Naive thymus-derived CD8-positive, alpha-beta T cell (primary cell): ENCODE measurements at regions of chr1 and their contacts with region 1.

Region 1: GRCh38 chr1:101262630-101263348 is 26.0 kb downstream of the S1PR1 start:
- DNase-seq: peak in 5 of 10 donors; percentile 21 to 67 (median 58)
- ATAC-seq: peak; percentile 65 to 77
- H3K4me3 Mint-ChIP-seq: peak overlapping the region; percentile 51 to 81 (median 80)
- H3K27ac Mint-ChIP-seq: peak overlapping the region; percentile 75 to 94 (median 90)
- H3K4me1 Mint-ChIP-seq: peaks cover 51 to 94% (median 90%) of the 10 kb centered on the region in 4 donors
- H3K27me3 Mint-ChIP-seq: no peaks in the 10 kb centered on the region

Region 2: DNA sequence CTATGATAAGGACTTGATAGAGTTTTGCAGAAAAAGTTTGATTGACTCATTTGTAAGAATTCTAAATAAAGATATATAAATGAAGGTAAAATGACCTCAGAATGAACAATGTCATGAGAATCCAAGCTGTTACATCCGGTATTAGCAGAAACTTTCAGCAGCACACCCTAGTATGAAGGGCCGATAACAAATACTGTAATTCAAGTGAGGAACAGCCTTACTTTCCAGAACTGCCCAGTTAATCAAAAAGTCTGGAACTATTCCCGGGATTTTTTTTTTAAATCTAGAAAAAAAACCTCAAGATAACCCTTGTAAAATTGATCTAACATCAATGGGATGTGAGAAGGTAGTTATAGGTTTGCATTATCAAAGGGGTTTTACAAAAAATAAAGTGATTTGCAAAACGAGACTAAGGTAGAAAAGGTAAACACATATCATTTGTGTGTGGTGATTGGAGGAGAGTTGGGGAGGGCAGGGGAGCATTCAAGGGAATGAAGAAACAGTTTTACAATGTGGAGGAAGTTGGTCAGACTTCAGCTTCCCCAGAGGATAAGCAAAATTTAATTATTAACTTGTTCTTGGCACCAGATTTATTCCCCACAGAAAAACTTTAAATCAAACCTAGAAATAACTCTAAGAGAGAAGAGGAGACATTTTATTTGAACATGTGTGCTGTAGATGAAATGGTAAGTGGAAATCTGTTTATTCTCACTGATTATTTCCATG is 619.2 kb before region 1 on chr1:
- POLR2A ChIA-PET with region 1: no interaction called
- DNase-seq: no peak
- ATAC-seq: no peak
- H3K4me3 Mint-ChIP-seq: no peak overlapping the region
- H3K27ac Mint-ChIP-seq: no peak overlapping the region
- H3K4me1 Mint-ChIP-seq: no peaks in the 10 kb centered on the region
- H3K27me3 Mint-ChIP-seq: peaks cover 1 to 39% (median 10%) of the 10 kb centered on the region in 5 donors

Region 3: GRCh38 chr1:101228424-101229134 is 34.2 kb before region 1 on chr1:
- POLR2A ChIA-PET with region 1: no interaction called
- DNase-seq: no peak
- ATAC-seq: peak in 1 of 2 donors; percentile 38
- H3K4me3 Mint-ChIP-seq: no peak overlapping the region
- H3K27ac Mint-ChIP-seq: peak overlapping the region in 4 of 10 donors; percentile 44 to 82 (median 63)
- H3K4me1 Mint-ChIP-seq: peaks cover 11 to 26% (median 22%) of the 10 kb centered on the region in 4 donors
- H3K27me3 Mint-ChIP-seq: no peaks in the 10 kb centered on the region

Region 4: DNA sequence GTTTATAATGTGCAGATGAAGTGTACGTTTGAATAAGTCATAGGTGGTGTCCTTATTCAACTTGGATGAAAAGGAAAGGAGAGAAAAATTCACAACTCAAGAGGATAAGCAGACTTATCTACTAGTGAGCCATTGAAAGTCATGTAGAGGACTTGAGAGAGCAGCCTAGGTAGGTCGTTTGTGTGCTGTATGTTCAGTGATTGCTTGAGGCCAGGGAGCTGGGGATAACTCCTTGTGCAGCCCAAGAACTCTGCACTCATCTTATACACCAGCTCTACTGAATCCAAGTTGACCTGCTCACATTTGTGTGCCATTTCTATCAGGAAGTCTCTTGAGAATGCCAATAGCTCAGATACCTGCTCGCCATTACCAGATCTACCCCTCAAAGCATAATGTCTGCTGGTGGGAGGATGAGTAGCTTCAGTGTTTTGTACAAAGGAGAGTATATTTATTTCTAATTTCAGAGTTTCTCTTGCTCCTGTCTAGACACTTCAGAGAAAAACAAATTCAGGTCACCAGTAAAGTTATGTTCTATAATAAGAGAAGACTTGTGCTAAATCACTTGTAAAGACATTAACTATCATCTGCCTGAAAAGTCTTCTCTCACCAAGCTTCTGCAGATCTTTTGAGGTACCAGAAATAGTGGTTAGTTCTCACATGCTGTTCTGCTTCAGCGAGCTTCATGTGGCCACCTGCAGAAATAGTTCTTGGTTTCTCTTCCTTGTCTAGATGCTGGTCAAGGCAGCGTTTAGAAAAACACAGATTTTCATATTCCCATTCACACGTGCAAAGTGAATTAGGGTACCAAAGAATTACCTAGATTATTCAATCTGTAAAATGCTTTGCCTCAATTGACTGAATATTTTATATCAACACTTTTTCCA is 15.1 kb before region 1 on chr1:
- POLR2A ChIA-PET with region 1: interaction called, 31 read pairs
- DNase-seq: no peak
- ATAC-seq: peak; percentile 53 to 64
- H3K4me3 Mint-ChIP-seq: peak overlapping the region in 8 of 10 donors; percentile 24 to 64 (median 45)
- H3K27ac Mint-ChIP-seq: peak overlapping the region; percentile 67 to 96 (median 80)
- H3K4me1 Mint-ChIP-seq: peaks cover 32 to 89% (median 76%) of the 10 kb centered on the region in 4 donors
- H3K27me3 Mint-ChIP-seq: no peaks in the 10 kb centered on the region

Region 5: DNA sequence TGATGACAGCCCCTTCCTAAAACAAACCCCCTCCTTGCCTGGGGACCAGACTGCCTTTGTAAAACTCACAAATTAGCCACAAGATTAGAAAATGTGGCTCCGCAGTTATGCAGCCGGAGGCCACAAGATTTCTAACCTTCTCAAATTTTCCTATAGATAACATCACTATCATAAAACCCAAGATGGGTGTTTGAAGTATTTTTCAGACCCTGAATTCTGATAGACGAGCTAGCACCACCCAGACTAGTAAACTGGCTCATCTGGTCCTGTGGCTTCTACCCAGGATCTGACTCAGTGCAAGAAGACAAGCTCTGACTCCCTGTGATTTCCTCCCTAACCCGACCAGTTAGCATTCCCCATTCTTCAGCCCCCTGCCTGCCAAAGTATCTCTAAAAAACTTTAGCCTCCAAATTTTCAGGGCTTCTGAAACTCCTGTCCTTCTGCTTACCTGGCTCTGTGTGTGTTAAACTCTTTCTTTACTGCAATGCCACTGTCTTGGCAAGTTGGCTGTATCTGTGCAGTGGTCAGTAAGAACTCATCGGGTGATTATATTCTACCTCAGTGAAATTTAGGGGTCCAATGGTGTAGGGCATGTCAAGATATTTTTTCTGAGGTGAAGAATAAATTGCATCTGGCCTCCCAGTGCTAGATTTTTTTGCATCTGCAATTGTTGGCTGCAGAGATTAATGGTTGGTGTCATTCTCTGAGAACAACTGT is 76.1 kb after region 1 on chr1:
- POLR2A ChIA-PET with region 1: no interaction called
- DNase-seq: no peak
- ATAC-seq: peak in 1 of 2 donors; percentile 49
- H3K4me3 Mint-ChIP-seq: peak overlapping the region in 2 of 10 donors; percentile 4 to 16
- H3K27ac Mint-ChIP-seq: peak overlapping the region in 6 of 10 donors; percentile 33 to 73 (median 65)
- H3K4me1 Mint-ChIP-seq: peaks cover 0 to 25% (median 3%) of the 10 kb centered on the region in 4 donors
- H3K27me3 Mint-ChIP-seq: no peaks in the 10 kb centered on the region